Activated naive CD4-positive, alpha-beta T cell treated with anti-CD3 and anti-CD28 coated beads for 36 hours (primary cell): ENCODE measurements at regions of chr20 and their contacts with region 1.

Region 1: DNA sequence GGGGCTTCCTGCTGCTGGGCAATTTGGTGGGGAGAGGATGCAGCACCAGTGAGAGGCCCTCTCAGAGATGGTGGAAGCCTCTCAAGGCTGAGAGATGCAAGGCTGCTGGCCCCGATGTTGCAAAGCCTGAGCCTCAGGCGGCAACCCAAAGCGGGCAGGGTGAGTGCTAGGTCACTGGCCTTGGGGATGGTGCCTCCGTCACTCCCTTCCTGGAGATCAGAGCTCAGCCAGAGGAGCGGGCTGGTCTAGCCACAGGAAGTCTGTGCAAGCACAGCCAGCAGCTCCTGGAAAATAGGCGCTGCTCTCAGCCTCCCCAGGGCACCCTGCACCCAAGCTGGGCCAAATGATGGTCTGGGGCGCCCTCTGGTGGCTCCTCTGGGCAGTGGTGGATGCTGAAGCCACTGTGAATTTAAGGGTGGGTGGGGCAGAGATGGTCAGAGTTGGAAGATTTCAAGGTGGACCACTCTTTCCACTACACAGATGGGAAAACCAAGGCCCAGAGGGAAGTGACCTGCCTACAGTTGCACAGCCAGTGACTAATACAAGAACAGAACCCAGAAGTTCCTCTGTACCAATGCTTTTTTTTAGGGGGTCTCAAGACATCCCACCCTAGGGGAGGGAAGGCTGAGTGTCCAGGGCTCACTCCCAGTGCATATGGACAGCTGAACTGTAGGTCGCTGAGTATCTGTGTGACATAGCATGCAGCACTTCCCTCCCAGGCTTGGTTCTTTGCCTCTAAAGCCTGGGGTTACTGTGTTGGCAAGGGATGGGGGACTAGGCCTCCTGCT is 20.8 kb downstream of the C20orf203 start:
- DNase-seq: peak; percentile 93
- H3K4me3 Mint-ChIP-seq: no peak overlapping the region
- H3K27ac Mint-ChIP-seq: no peak overlapping the region
- H3K4me1 Mint-ChIP-seq: peaks cover 8% of the 10 kb centered on the region
- H3K27me3 Mint-ChIP-seq: no peaks in the 10 kb centered on the region

Region 2: DNA sequence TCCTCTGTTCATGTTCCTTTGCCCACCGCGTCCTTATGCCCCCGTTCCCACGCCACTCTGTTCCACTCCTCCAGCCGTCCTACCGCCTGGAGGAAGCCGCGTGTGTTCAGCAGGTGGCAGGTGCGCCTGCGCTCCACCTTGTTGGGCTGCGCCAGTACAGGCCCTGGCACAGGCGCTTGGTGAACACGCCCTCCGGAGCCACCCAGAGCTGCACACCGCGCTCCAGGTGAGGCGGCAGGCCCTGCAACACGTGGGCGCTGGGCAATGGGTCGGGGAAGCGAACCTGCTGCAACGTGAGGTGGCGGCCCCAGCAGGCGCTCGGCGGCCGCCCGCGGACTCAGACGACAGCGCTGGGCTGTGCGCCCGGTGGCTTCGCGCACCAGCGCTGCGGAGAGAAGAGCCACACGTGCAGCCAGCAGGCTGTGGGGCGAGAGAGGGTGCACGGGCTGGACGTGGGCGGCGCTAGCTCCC is 803.4 kb before region 1 on chr20:
- CTCF ChIA-PET with region 1: no interaction called
- intact Hi-C with region 1: loop called (anchors 1 kb)
- DNase-seq: no peak
- H3K4me3 Mint-ChIP-seq: no peak overlapping the region
- H3K27ac Mint-ChIP-seq: no peak overlapping the region
- H3K4me1 Mint-ChIP-seq: no peaks in the 10 kb centered on the region
- H3K27me3 Mint-ChIP-seq: peaks cover 21% of the 10 kb centered on the region

Region 3: DNA sequence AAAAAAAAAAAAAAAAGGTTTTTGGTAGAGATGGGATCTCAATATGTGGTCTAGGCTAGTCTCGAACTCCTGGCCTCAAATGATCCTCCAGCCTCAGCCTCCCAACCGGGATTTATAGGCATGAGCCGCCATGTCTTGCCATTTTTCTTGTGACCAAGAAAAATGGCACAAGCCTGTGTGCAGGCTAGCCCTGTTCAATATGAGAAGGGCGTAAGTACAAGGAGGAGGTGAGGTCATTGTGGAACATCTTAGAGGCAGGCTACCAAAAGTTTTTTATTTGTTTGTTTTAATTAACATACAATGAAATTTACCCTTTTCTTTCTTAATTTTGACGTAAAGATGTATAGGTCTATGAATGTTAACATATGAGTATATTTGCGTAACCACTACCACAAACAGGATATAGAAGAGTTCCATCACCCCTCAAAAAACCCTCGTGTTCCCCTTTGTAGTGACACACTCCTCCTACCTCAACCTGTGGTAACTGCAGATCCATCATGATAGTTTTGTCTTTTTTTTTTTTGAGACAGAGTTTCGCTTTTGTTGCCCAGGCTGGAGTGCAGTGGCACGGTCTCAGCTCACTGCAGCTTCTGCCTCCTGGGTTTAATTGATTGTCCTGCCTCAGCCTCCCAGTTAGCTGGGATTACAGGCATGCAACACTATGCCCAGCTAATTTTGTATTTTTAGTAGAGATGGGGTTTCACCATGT is 403.7 kb before region 1 on chr20:
- CTCF ChIA-PET with region 1: no interaction called
- intact Hi-C with region 1: no loop called
- DNase-seq: peak; percentile 61
- H3K4me3 Mint-ChIP-seq: peak overlapping the region; percentile 45
- H3K27ac Mint-ChIP-seq: peak overlapping the region; percentile 96
- H3K4me1 Mint-ChIP-seq: peaks cover 54% of the 10 kb centered on the region
- H3K27me3 Mint-ChIP-seq: no peaks in the 10 kb centered on the region

Region 4: DNA sequence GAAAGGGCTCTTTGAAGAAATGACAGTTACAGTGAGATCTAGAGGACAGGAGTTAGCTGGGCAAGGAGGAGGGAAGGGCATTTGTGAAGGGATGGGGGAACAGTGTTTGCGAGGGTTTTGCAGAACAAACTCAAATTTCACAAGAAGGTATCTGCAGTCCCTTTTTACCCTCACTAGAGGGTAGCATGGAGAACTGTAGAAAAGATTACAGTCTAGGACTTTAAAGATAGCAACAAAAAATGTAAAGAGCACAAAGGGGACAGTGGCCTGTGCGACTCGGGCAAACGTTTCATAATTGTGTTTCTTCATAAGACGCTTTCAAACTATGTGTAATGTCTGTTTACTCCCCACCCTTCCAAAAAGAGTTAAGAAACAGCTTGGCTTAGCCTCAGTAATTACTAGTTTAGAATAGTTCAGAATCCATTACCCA is 316.0 kb before region 1 on chr20:
- CTCF ChIA-PET with region 1: no interaction called
- intact Hi-C with region 1: loop called (anchors 10 kb)
- DNase-seq: no peak
- H3K4me3 Mint-ChIP-seq: no peak overlapping the region
- H3K27ac Mint-ChIP-seq: no peak overlapping the region
- H3K4me1 Mint-ChIP-seq: peaks cover 29% of the 10 kb centered on the region
- H3K27me3 Mint-ChIP-seq: no peaks in the 10 kb centered on the region

Region 5: GRCh38 chr20:32516583-32517517 is 136.1 kb before region 1 on chr20:
- CTCF ChIA-PET with region 1: interaction called, 330 read pairs
- intact Hi-C with region 1: loop called (anchors 1 kb)
- DNase-seq: no peak
- H3K4me3 Mint-ChIP-seq: no peak overlapping the region
- H3K27ac Mint-ChIP-seq: no peak overlapping the region
- H3K4me1 Mint-ChIP-seq: peaks cover 58% of the 10 kb centered on the region
- H3K27me3 Mint-ChIP-seq: no peaks in the 10 kb centered on the region

Region 6: DNA sequence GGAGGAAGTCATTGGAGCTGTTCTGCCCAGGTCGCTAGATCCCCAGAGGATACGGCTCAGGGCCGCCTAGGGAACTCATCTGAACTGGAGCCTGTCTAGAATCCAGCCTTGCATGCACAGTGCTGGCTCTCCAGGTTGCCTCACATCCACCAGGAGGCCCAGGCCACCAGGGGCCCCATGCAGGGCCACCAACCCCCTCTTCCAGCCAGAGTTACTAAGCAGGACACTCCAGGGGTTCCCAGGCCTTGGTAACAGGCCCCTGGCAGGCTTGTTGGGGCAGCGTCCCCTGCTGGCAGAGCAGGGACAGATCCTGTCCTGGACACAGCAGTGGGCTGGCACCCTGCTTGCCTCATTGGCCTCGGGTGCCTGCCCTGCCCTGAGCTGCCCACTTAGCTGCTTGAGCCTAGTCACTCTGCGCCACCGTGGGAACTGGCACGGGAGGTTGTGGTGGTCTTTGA is 241.1 kb after region 1 on chr20:
- CTCF ChIA-PET with region 1: no interaction called
- intact Hi-C with region 1: no loop called
- DNase-seq: peak; percentile 41
- H3K4me3 Mint-ChIP-seq: no peak overlapping the region
- H3K27ac Mint-ChIP-seq: no peak overlapping the region
- H3K4me1 Mint-ChIP-seq: peaks cover 4% of the 10 kb centered on the region
- H3K27me3 Mint-ChIP-seq: no peaks in the 10 kb centered on the region